Heart left ventricle (tissue), 16 donors: ENCODE measurements at regions of chr2 and their contacts with region 1.

Region 1: DNA sequence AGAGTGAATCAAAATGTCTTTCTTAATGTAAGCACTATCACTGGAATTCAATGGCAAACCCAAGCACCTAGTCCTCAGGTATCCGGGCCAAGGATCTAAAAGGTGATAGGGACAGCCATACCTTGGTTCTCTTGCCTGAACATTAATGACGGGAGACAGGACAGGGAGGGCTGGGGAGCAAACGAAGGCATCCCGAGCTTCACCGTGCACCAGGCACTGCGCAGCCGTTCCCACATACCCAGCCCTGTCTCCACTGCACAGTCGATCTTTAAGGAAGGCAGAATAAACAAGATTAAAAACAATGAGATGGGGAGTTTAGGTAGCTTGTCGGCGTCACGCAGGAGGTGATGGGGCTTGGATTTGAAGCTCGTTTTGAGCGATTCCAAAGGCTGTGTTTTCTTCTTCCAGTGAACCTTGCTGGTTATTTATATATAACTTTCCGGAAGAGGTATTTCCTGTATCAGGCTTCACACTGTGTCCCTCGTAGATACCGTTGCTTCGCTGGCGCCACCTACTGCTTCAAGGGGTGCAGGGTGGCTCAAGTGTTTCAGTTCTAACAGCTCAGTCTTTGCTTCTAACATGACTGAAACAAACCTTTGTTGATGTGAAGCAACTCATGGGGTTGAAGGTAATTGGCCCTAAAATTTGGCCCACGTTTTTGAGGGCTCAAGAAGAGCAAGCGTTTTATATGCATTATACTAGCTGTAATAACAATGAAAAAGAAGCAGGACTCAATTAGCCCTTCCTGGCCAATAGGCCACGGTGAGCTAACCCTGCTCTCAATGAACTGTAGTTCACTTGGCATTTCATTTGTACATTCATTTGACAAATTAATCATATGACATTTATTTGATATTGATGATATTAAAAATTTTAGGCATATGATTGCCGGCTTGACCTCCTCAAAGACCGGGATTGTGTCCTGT is 77.4 kb downstream of the DCDC2C start:
- DNase-seq: peak; percentile 36 to 70 (median 52)
- ATAC-seq: peak in 3 of 4 donors; percentile 68 to 90 (median 88)
- H3K4me3 ChIP-seq: peak overlapping the region in 6 of 12 donors; percentile 7 to 34 (median 26)
- H3K27ac ChIP-seq: no peak overlapping the region
- H3K4me1 ChIP-seq: peaks cover 0 to 11% (median 0%) of the 10 kb centered on the region in 12 donors
- H3K27me3 ChIP-seq: peaks cover 0 to 18% (median 0%) of the 10 kb centered on the region in 9 donors
- CTCF ChIP-seq: peak; percentile 47 to 80 (median 63)
- POLR2A ChIP-seq: no peak

Region 2: GRCh38 chr2:3728104-3729054 is 52.4 kb before region 1 on chr2:
- intact Hi-C with region 1: loop called in 9 of 10 experiments (anchors 1 to 10 kb)
- DNase-seq: no peak
- ATAC-seq: peak in 2 of 4 donors; percentile 44 to 54
- H3K4me3 ChIP-seq: peak overlapping the region in 1 of 12 donors; percentile 35
- H3K27ac ChIP-seq: no peak overlapping the region
- H3K4me1 ChIP-seq: peaks cover 0 to 7% (median 4%) of the 10 kb centered on the region in 12 donors
- H3K27me3 ChIP-seq: peaks cover 0 to 26% (median 0%) of the 10 kb centered on the region in 9 donors
- CTCF ChIP-seq: peak; percentile 28 to 70 (median 56)
- POLR2A ChIP-seq: no peak

Region 3: DNA sequence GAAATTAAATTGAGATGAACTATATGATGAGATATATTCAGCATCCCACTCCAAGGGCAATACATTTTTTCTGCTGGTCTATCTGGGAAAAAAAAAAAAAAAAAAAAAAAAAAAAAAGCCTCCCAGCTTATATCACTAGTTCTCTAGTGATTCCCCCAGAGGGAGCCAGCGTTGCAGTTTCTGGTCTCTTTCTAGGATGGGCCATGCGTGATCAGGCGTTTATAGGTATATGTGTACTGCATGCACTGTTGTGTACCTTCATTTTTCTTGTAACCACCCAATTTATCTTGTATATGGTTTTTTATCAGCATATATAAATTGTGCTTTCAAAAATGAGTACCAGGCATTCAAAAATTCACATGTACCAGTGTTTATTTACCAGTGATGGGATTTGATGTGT is 42.3 kb before region 1 on chr2:
- intact Hi-C with region 1: loop called in 1 of 10 experiments (anchors 10 kb)
- DNase-seq: no peak
- ATAC-seq: no peak
- H3K4me3 ChIP-seq: no peak overlapping the region
- H3K27ac ChIP-seq: no peak overlapping the region
- H3K4me1 ChIP-seq: no peaks in the 10 kb centered on the region
- H3K27me3 ChIP-seq: peaks cover 0 to 12% (median 0%) of the 10 kb centered on the region in 9 donors
- CTCF ChIP-seq: peak in 4 of 12 donors; percentile 6 to 20 (median 10)
- POLR2A ChIP-seq: no peak